ENCODE measurements at regions of chr15 and their contacts with region 1.

Region 1: DNA sequence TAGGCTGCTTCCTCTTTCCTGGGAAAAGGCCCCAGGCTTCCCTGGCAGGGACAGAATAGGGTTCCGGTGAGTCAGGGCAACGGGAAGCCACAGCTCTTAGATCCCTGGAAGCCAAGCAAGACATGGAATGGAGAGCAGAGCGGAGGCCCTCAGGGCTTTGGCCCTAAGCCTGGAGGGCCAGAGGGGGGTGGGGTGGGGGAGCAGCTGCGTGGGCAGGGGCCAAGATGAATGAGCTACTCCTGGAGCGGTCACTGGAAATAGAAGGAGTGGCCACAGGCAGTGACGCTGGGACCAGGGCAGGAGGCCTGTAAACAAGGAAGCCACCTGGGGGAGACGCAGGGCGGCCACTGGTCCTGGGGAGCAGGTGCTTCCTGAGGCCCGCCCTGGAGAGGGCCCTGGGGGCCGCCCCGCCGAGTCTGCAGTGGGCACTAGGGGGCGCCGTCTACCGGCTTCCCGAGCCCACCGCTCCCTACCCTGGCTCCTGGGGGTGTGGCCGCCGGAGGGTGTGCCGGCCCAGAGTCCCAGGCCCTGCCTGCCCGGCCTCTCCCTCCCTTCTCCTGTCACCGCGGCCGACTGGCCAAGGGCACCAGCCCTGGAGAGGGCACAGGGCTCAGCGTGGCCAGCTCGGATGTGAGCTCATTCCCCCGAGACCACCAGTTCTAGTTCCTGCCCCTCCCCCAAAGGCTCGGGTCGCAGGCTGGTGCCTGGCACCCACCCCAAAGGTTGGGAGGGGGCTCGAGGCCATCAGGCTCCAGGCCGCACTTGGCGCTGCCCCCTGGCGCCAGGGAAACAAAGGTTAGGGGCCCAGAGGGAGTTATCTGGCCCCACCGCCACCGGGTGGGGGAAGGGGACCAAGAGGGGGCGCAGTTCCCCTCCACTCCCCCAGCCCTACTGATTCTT is 12.1 kb downstream of the VPS18 start:
- DNase-seq: peak; percentile 92
- H3K4me3 ChIP-seq: peak overlapping the region; percentile 25
- H3K27me3 ChIP-seq: no peaks in the 10 kb centered on the region
- CTCF ChIP-seq: peak; percentile 86

Region 2: DNA sequence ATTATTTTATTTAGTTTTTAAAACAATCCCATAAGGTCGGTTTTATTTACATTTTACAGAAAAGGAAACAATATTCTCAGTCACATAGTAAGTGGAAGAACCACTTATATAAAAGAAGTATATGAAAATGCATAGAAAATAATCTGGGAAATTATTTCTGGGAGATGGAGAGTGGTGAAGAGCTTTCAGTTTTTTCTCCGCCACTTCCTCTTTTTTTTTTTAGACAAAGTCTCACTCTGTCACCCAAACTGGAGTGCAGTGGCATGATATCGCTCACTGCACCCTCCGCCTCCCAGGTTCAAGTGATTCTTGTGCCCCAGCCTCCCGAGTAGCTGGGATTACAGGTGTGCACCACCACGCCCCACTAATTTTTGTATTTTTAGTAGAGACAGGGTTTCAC is 190.2 kb before region 1 on chr15:
- CTCF ChIA-PET with region 1: no interaction called
- POLR2A ChIA-PET with region 1: no interaction called
- DNase-seq: no peak
- H3K4me3 ChIP-seq: no peak overlapping the region
- H3K27me3 ChIP-seq: no peaks in the 10 kb centered on the region
- CTCF ChIP-seq: no peak

Region 3: DNA sequence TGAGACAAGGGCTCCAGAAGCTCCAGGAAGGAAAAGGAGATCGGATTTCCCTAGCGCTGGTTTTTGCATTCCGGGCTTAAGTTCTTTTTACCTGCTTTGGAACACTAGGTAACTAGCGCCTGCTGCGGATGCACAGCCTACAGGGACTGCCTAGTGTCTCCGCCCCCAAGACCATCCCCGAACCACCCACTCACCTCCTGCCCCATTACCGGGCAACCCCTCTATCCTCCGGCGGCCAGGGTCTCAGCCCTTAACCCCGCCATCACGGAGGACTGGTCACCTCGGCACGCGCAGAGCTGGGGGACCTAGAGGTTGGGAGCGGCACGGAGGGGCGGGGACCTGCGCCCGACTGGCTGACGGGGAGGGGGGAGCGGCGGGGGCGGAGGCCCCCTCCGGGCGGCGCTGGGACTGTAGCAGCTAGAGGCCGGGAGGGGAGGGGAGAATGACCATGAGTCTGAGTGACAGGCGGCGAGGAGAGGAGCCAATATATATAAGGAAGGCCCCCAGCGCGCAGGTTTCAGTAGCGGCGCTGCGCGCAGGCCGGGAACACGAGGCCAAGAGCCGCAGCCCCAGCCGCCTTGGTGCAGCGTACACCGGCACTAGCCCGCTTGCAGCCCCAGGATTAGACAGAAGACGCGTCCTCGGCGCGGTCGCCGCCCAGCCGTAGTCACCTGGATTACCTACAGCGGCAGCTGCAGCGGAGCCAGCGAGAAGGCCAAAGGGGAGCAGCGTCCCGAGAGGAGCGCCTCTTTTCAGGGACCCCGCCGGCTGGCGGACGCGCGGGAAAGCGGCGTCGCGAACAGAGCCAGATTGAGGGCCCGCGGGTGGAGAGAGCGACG is 22.7 kb after region 1 on chr15 and contains the start of gene DLL4:
- CTCF ChIA-PET with region 1: interaction called, 52 read pairs
- POLR2A ChIA-PET with region 1: no interaction called
- DNase-seq: no peak
- H3K4me3 ChIP-seq: peak within 1 kb of the TSS; percentile 51
- H3K27me3 ChIP-seq: peaks cover 33% of the 10 kb centered on the region
- CTCF ChIP-seq: no peak
- polyA plus RNA-seq, gene DLL4: 0.32 and 0.47 TPM in 2 replicates

Region 4: GRCh38 chr15:40952901-40953712 is 46.8 kb after region 1 on chr15 and contains the start of gene CHAC1:
- CTCF ChIA-PET with region 1: interaction called, 11 read pairs
- POLR2A ChIA-PET with region 1: interaction called, 5 read pairs
- DNase-seq: peak; percentile 87
- H3K4me3 ChIP-seq: peak within 1 kb of the TSS; percentile 92
- H3K27me3 ChIP-seq: no peaks in the 10 kb centered on the region
- CTCF ChIP-seq: no peak
- polyA plus RNA-seq, gene CHAC1: 107 and 155 TPM in 2 replicates

Region 5: GRCh38 chr15:41022487-41023090 is 116.2 kb after region 1 on chr15:
- CTCF ChIA-PET with region 1: interaction called, 309 read pairs
- POLR2A ChIA-PET with region 1: no interaction called
- DNase-seq: no peak
- H3K4me3 ChIP-seq: no peak overlapping the region
- H3K27me3 ChIP-seq: no peaks in the 10 kb centered on the region
- CTCF ChIP-seq: peak; percentile 88

Region 6: GRCh38 chr15:41043276-41043951 is 137.1 kb after region 1 on chr15:
- CTCF ChIA-PET with region 1: interaction called, 12 read pairs
- POLR2A ChIA-PET with region 1: no interaction called
- DNase-seq: peak; percentile 60
- H3K4me3 ChIP-seq: no peak overlapping the region
- H3K27me3 ChIP-seq: no peaks in the 10 kb centered on the region
- CTCF ChIP-seq: no peak

Measured in BJ (cell line).